Thyroid gland (tissue), 4 donors: ENCODE measurements at regions of chrX and their contacts with region 1.

Region 1: DNA sequence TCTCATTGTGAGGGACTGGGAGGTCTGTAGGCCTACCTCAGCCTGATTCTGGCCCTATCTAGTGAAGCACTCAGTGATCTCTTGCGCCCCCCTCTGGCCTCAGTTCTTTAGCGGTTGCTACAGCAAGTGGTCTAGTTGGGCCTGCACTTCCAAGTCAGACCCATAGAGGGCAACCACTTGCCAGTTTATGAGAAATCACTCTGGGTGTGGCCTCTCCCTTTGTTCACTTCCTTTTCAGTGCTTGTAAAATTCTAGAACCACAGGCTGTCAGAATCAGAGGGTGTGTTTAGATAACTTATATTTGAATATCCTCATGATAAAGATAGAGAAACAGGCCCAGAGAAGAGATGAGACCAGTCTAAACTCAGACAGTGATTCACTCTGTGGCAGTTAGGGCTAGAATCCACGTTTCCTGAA is 60.9 kb upstream of the LAS1L start:
- DNase-seq: peak; percentile 93 to 95
- H3K4me3 ChIP-seq: no peak overlapping the region
- H3K27ac ChIP-seq: peak overlapping the region; percentile 44 to 78 (median 54)
- H3K4me1 ChIP-seq: peaks cover 0 to 13% of the 10 kb centered on the region in 2 donors
- H3K27me3 ChIP-seq: no peaks in the 10 kb centered on the region
- CTCF ChIP-seq: peak; percentile 78 to 99 (median 98)
- POLR2A ChIP-seq: no peak

Region 2: GRCh38 chrX:65706041-65706828 is 110.8 kb after region 1 on chrX:
- intact Hi-C with region 1: loop called (anchors 10 kb)
- DNase-seq: peak; percentile 55 to 57
- H3K4me3 ChIP-seq: no peak overlapping the region
- H3K27ac ChIP-seq: peak overlapping the region; percentile 51 to 73 (median 71)
- H3K4me1 ChIP-seq: peaks cover 3 to 50% of the 10 kb centered on the region in 2 donors
- H3K27me3 ChIP-seq: no peaks in the 10 kb centered on the region
- CTCF ChIP-seq: no peak
- POLR2A ChIP-seq: no peak

Region 3: DNA sequence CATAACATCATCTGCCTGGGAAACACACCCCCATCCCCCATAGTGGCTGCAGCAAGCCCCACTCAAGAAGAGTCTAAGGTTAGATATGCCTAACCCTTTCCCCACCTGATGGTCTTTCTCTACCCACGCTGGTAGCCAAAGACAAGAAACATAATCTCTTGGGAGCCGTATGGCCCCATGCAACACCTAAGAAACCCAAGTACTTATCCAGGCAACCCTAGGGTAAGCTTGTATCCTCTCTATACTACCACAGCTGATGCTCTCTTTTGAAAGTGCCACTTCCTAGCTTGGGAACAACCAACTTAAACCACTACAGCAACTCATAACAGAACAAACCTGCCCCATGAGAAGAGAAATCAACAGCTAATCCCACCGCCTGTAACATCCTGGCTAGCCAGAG is 233.1 kb after region 1 on chrX:
- intact Hi-C with region 1: no loop called
- DNase-seq: no peak
- H3K4me3 ChIP-seq: no peak overlapping the region
- H3K27ac ChIP-seq: no peak overlapping the region
- H3K4me1 ChIP-seq: no peaks in the 10 kb centered on the region
- H3K27me3 ChIP-seq: no peaks in the 10 kb centered on the region
- CTCF ChIP-seq: no peak
- POLR2A ChIP-seq: no peak

Region 4: DNA sequence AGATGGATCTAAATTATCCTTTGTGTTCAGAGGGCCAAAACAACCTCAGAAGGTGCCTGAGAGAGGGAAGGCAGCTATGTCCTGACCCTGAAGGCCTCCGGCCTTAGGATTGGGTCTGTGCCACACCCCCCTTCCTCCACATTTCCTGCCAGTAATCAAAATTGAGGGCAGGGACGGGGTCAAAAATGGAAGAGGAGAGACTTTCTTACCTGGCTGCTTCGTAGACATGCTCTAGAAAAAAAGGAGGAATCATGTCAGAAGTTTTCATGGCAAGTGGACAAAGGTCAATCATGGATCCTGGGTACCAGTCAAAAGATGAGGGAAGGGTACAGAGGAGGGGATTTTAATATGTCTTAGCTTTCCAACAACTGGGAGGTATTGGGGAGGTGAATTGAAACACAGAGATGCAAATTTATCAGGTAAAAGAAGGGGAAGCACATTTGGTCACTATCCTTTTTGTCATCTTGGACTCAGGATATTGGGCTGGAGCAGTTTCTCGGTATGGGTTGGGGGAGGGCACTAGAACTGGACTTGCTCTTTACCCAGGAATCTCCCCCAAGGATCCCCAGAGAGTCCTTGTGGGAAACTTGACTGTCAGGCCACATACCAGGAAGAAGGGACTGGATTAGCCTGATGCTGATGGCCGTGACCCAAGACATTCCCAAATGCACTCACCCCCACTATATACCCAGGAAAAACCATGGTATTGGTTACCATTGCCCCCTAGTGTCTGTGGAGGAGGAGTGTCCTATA is 427.3 kb after region 1 on chrX:
- intact Hi-C with region 1: no loop called
- DNase-seq: no peak
- H3K4me3 ChIP-seq: no peak overlapping the region
- H3K27ac ChIP-seq: no peak overlapping the region
- H3K4me1 ChIP-seq: no peaks in the 10 kb centered on the region
- H3K27me3 ChIP-seq: no peaks in the 10 kb centered on the region
- CTCF ChIP-seq: no peak
- POLR2A ChIP-seq: no peak